HEK293 (cell line): ENCODE measurements at regions of chr22 and their contacts with region 1.

Region 1: GRCh38 chr22:48782811-48783511 is 1044.7 kb downstream of the BRD1 start:
- H3K4me3 ChIP-seq: no peak overlapping the region
- H3K27ac ChIP-seq: no peak overlapping the region
- H3K4me1 ChIP-seq: no peaks in the 10 kb centered on the region
- CTCF ChIP-seq: no peak

Region 2: DNA sequence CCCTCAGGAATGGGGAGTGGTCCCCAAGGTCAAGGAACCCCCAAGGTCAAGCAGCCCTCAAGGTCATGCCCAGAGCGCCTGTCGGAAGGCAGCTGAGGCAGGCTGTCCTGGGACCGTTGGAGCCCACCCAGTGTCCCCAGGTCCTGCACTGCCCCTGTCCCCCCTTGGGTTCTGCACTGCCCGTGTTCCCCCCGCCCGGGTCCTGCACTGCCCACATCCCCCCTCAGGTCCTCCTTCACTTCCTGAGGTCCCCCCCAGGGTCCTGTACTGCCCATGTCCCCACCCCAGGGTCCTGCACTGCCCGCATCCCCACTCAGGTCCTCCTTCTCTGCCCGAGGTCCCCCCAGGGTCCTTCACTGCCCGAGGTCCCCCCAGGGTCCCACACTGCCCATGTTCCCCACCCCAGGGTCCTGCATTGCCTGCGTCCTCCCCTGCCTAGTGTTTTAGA is 28.3 kb before region 1 on chr22:
- CTCF ChIA-PET with region 1: no interaction called
- POLR2A ChIA-PET with region 1: no interaction called
- H3K4me3 ChIP-seq: no peak overlapping the region
- H3K27ac ChIP-seq: no peak overlapping the region
- H3K4me1 ChIP-seq: no peaks in the 10 kb centered on the region
- CTCF ChIP-seq: no peak

Region 3: DNA sequence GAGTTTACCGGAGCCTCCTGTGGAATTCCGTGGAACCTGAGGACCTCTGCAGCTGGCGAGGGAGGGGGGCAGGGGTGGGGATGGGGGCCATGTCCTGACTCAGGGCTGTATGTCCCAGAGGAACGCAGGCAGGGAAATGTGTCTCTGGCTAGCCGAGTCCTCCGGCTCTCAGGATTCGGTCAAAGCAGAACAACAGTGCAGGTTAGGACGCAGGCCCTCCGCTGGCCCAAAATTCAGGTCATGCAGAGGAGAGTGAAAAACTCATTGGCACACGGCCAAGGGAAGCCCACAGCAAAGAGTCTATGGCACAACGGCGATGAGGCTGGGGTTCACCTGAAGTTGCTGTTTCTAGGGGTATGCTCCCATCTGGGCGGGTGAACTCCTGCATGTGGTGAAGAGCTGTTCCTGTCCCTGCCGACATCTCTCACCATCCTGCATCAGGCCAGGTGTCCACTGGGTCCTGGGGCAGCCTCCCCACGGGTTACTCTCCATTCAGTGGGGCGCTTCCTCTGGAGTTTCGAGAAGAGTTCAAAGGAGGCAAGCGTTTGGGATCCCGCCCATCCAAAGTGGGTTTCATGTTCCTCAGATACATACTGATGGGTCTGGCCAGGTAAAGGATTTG is 10.6 kb before region 1 on chr22:
- CTCF ChIA-PET with region 1: interaction called, 20 read pairs
- POLR2A ChIA-PET with region 1: no interaction called
- H3K4me3 ChIP-seq: no peak overlapping the region
- H3K27ac ChIP-seq: no peak overlapping the region
- H3K4me1 ChIP-seq: no peaks in the 10 kb centered on the region
- CTCF ChIP-seq: no peak

Region 4: GRCh38 chr22:48796310-48797015 is 13.5 kb after region 1 on chr22:
- CTCF ChIA-PET with region 1: interaction called, 13 read pairs
- POLR2A ChIA-PET with region 1: no interaction called
- H3K4me3 ChIP-seq: no peak overlapping the region
- H3K27ac ChIP-seq: no peak overlapping the region
- H3K4me1 ChIP-seq: no peaks in the 10 kb centered on the region
- CTCF ChIP-seq: no peak